ENCODE measurements at regions of chr2 and their contacts with region 1.

Region 1: DNA sequence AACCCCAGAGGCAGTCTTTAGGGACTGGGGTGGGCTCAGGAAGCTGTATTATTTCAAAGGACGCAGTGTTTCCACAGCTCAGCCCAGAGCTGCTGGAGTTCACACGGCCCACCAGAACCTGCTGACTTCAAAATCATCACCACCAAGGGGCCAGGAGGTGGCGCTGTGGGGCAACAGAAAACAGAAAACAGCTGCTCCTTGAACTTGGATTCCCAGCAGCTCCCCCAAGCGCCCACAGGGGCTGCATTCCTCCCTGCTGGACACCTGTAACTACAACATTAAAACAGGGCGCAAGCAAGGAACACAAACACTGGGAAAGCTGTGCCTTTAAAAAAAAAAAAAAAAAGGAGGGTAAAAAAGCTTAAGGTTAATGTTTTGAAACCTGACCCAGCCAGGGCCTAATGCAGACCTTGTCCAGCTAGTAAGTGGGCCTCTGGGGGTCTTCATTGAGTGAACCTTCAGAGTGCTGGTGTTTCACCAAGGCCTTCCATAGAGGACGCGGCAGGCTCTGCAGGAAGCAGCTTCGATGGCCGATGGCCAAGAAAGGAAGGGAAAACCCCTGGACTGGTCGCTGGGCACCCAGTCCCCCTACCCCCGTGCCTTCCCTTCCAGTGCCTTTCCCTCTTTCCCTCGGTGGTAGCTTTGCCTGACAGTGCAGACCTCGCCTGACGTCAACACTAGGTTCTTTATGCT is 25.9 kb downstream of the MLPH start:
- DNase-seq: peak; percentile 92
- ATAC-seq: peak; percentile 87
- H3K4me3 Mint-ChIP-seq: no peak overlapping the region
- H3K27ac Mint-ChIP-seq: no peak overlapping the region
- H3K4me1 Mint-ChIP-seq: peaks cover 12% of the 10 kb centered on the region
- H3K27me3 Mint-ChIP-seq: no peaks in the 10 kb centered on the region; the same call in 1 of the 2 replicates
- CTCF ChIP-seq: peak; percentile 94

Region 2: DNA sequence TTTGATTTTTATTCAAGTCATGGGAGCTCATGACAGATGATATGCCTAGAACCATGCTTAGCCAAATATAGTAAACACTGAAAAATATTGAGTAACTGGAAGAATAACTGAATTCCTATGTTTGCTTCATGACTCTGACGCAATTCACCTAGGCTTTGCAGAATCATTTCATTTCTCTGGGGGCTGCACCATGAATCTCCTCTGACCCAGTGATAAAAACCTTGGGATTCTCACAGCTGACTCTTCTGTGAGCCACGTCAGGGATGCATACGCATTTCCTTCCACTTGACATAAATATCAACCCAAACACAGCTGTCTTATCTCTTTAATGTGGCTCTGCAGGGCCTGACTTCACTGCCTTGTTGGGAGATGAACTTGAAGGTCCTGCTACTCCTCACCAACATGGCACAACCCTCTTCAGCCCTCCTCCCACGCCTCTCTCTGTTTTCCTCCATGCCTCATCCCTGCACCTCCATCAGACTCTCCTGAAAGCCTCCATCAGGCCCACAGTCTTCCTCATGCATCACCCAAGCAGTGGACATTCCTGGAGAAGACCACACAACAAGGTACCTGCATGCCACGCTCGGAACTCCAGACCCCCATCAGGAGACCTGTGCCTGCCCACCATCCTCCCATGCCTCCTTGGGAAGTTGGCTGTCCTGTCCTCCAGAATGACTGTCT is 128.8 kb before region 1 on chr2:
- CTCF ChIA-PET with region 1: no interaction called
- POLR2A ChIA-PET with region 1: no interaction called
- DNase-seq: no peak
- ATAC-seq: no peak
- H3K4me3 Mint-ChIP-seq: no peak overlapping the region
- H3K27ac Mint-ChIP-seq: no peak overlapping the region; the same call in 1 of the 2 replicates
- H3K4me1 Mint-ChIP-seq: no peaks in the 10 kb centered on the region
- H3K27me3 Mint-ChIP-seq: no peaks in the 10 kb centered on the region; the same call in 1 of the 2 replicates
- CTCF ChIP-seq: no peak

Region 3: DNA sequence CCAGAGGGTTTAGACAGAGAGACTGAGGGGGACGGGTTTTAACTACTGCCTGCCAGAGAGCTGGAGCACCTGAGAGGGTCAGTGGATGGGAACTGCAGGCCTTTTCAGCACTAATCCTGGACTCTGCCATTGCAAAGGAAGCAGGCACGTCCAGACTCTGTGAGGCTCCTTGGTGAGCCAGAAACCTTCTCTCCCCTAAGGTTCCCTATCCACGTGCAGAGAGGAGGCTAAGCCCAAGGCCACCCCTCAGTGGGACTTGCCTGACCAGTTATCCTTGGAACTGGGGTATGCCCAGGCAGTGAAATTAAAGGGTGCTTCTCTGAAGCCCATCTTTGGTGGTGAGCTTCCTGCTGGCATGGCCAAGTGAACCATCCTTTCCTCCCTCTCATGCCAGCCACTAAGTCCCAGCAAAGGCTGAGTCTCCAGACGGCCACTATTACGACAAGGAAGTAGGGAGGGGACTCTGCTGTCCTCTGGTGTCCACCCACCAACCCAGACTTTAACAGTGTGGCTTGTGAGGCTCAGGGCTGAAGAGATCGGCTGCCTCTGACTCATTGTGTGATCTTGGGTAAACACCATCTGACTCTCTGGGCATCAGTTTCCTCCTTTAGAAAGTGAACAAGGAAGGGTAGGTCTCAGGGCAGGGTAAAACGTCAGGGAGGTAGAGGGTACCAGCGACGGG is 29.7 kb before region 1 on chr2:
- CTCF ChIA-PET with region 1: interaction called, 17 read pairs
- POLR2A ChIA-PET with region 1: no interaction called
- DNase-seq: no peak
- ATAC-seq: no peak
- H3K4me3 Mint-ChIP-seq: no peak overlapping the region
- H3K27ac Mint-ChIP-seq: no peak overlapping the region
- H3K4me1 Mint-ChIP-seq: peaks cover 16% of the 10 kb centered on the region
- H3K27me3 Mint-ChIP-seq: peaks cover 84% of the 10 kb centered on the region
- CTCF ChIP-seq: no peak

Region 4: DNA sequence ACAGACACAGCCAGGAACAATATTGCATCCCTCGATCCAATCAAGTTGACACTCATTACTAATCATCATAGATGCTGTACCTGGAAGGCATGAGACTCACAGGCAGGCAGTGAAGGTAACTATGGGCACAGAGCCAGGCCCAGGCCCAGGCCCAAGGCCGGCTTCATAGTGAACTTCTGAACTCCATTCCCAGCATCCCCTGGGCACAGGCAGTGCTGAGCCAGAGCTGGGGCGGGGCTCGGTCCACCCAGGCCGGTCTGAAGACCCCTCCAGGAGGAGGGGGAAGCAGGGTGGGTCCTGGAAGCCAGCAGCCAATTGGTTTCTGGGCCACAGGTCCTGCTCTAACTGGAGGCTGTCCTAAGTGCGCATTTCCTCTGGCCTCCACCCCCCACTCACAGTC is 11.7 kb after region 1 on chr2:
- CTCF ChIA-PET with region 1: interaction called, 13 read pairs
- POLR2A ChIA-PET with region 1: no interaction called
- DNase-seq: no peak
- ATAC-seq: no peak
- H3K4me3 Mint-ChIP-seq: no peak overlapping the region
- H3K27ac Mint-ChIP-seq: no peak overlapping the region
- H3K4me1 Mint-ChIP-seq: no peaks in the 10 kb centered on the region
- H3K27me3 Mint-ChIP-seq: no peaks in the 10 kb centered on the region
- CTCF ChIP-seq: no peak

Region 5: DNA sequence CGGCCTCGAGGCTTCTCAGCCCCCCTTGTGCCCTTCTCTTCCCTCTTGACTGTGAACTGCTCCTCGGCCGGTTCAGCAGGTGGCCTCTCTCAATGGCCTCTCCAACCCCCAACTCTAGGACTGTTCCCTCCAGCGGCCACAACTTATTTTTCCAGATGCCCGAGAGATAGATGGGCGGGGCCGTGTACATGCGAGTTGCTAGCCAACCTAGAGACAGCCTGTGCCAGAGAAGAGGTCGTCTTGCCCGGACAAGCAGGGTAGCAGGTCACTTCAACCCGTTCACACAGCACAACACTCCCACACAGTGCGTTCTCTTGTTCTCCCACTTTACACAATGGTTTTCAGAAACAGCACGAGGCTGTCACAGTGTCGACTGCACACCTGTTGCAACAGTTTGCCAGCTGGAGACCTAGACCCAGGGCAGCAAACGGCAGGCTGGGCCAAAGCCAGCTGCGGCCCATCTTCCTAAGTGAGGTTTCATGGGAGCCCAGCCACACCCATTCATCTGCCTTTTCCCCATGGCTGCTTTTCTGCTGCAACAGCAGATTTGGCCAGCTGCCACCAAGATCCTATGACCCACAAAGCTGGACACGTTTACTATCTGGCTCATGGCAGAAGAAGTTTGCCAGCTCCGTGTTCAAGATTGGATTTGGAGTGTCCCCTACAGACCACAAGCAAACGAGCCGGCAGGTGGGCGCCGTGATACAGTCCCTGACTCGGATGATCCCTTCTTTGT is 46.2 kb after region 1 on chr2:
- CTCF ChIA-PET with region 1: interaction called, 20 read pairs
- POLR2A ChIA-PET with region 1: no interaction called
- DNase-seq: no peak
- ATAC-seq: no peak
- H3K4me3 Mint-ChIP-seq: no peak overlapping the region
- H3K27ac Mint-ChIP-seq: no peak overlapping the region
- H3K4me1 Mint-ChIP-seq: no peaks in the 10 kb centered on the region
- H3K27me3 Mint-ChIP-seq: peaks cover 3% of the 10 kb centered on the region
- CTCF ChIP-seq: no peak

Region 6: DNA sequence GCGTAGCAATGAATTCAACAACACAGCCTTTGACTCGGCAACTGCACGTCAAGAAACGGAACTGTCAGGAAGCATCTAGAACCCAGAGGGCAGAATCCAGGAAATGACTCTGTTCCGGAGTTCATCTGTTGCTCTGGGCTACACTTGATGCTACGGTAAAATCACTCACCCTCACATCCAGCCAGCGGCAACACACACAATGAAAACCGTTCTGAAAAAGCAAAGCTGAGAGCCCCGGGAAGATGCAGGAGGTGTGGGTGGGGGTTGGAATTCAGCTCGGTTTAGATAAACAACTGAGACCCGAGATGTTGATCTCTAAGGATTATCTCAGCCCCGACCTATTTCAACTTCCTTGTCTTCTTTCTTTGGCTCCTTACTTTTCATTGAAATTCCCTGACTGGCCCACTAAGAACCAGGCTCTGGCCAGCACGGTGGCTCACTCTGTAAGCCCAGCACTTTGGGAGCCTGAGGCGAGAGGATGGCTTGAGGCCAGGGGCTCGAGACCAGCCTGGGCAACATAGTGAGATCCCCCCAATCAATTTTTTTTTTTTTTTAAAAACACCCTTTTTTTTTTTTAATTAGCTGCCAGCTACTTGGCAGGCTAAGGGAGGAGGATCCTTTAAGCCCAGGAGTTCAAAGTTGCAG is 90.9 kb after region 1 on chr2:
- CTCF ChIA-PET with region 1: interaction called, 21 read pairs
- POLR2A ChIA-PET with region 1: no interaction called
- DNase-seq: no peak
- ATAC-seq: peak; percentile 28
- H3K4me3 Mint-ChIP-seq: no peak overlapping the region
- H3K27ac Mint-ChIP-seq: peak overlapping the region; percentile 64
- H3K4me1 Mint-ChIP-seq: peaks cover 50% of the 10 kb centered on the region
- H3K27me3 Mint-ChIP-seq: peaks cover 12% of the 10 kb centered on the region
- CTCF ChIP-seq: no peak

Region 7: DNA sequence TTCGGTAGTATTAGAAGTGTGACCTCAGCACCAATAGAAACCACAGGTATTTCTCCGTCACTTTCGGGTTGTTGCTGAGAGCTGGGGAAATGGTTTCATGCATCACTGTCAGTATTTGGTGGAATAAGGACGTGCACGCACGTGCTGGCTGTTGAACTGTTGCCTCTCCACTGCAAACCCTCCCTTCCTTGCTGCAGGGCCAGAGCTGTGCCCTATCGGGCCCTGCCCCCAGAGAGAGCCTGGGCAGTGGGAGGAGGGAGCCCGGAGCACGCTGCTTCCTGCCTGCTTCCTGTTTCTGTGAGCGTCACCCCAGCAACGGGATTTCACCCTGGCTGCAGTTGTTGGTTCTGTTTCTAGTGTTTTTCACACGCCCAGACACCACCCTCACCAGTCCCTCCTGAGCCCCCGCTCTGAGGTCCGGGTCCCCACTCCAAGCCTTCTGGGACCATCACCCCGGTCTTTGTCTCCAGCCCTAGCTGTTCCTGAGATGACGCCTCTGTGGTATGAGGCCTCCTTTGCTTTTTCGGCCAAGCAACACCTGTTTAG is 161.9 kb after region 1 on chr2:
- CTCF ChIA-PET with region 1: interaction called, 12 read pairs
- POLR2A ChIA-PET with region 1: no interaction called
- DNase-seq: peak; percentile 70
- ATAC-seq: peak; percentile 91
- H3K4me3 Mint-ChIP-seq: no peak overlapping the region; the same call in 1 of the 2 replicates
- H3K27ac Mint-ChIP-seq: peak overlapping the region; percentile 85
- H3K4me1 Mint-ChIP-seq: peaks cover 50% of the 10 kb centered on the region
- H3K27me3 Mint-ChIP-seq: no peaks in the 10 kb centered on the region
- CTCF ChIP-seq: no peak

Measured in WTC11 (cell line).